ENCODE measurements at regions of chr12 and their contacts with region 1.

Region 1: GRCh38 chr12:70733385-70733784 is 96.2 kb upstream of the PTPRB start:
- DNase-seq: peak; percentile 71 to 79 (median 72)
- ATAC-seq: peak; percentile 95
- H3K4me3 ChIP-seq: no peak overlapping the region
- H3K27ac ChIP-seq: no peak overlapping the region
- H3K4me1 ChIP-seq: no peaks in the 10 kb centered on the region
- H3K27me3 ChIP-seq: no peaks in the 10 kb centered on the region
- CTCF ChIP-seq: peak; percentile 63 to 86 (median 68)
- EP300 ChIP-seq: 0 out of 2 replicates have a peak, but pooled peaks have one; percentile 17
- POLR2A ChIP-seq: no peak
- RAD21 ChIP-seq: peak; percentile 95

Region 2: DNA sequence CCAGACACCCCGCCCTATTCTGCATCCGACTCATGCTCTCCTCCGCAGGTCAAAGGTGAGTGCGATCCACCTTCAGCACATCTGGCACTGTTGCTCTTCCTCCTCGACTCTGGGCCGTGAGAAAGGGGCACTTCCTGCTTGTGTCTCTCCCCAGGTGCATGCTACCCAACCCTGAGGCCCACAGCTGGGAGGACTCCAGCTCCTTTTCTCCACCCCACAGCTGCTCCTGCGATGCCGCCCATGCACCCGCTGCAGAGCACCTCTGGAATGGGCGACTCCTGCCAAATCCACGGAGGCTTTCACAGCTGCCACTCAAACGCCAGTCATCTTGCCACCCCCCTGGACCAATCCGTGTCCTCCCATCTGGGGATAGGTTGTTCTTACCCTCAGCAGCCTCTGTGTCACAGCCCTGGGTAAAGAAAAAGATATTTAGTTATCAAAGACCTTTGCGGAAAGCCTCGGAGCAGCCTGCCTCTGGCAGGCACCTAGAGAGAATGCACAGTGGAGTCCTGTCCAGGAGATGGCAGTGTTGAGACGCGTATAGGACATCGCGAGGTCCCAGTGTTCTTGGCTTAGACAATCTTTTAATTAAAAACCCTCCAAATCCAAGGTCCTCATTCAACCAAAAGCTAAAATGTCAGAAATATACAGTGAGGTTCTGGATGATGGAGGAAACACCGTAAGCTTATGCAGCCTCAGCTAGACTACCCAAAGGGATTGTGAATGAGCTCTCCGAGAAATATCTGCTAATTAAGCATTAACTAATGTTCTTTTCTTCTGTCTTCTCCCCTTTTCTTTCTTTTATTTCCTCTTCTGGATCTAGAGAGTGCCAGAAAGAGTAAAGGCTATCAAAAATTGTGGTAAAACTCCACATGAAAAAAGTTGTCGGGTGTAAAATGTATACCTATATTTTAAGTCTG is 854.1 kb before region 1 on chr12:
- CTCF ChIA-PET with region 1: interaction called, 8 read pairs
- POLR2A ChIA-PET with region 1: no interaction called
- in situ Hi-C with region 1: loop called (anchors 5 kb)
- intact Hi-C with region 1: loop called (anchors 1 kb)
- DNase-seq: peak; percentile 74 to 80 (median 77)
- ATAC-seq: peak; percentile 99
- H3K4me3 ChIP-seq: no peak overlapping the region
- H3K27ac ChIP-seq: no peak overlapping the region
- H3K4me1 ChIP-seq: peaks cover 0 to 7% of the 10 kb centered on the region in 2 experiments; a peak in 2 of 5 replicates
- H3K27me3 ChIP-seq: peaks cover 5 to 12% of the 10 kb centered on the region in 2 experiments; a peak in 4 of 5 replicates
- CTCF ChIP-seq: peak; percentile 80 to 92 (median 92)
- EP300 ChIP-seq: no peak
- POLR2A ChIP-seq: no peak
- RAD21 ChIP-seq: peak; percentile 86 to 94

Region 3: DNA sequence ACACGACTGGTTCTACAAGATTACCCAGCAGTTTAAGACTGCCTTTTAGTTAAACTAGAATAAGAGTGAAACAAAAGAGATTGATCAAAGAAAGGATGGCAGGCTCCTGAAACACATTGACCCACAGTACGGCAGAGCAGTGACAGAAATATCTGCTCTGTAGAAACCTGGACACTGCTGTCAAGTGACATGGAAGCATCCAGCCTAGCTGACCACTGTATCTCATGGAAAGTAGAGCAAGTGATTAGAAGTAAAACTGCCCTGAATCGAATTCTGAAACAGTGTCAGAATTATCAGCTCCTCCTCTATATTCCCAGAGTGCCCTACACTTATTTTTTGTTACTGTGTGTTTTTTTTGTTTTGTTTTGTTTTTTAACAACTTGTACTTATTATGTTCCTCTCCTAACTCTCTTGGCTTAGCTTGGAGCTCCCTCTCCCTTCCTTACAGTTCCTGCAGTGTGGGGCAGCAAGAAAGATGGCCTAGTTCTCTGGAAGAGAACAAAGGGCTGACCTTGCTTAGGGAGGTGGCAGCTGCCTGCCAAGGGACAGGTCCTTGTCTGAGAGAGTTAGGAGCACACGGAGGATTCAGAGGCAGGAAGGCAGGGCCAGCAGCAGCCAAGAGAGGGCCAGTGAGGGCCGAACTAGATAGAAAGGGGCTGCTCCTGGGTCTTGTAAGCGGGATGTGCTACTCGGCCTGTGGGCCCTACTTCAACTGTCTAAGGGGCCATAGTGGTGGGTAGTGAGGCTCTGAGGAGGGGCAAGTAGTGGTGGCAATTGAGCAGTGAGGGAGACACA is 90.0 kb after region 1 on chr12:
- CTCF ChIA-PET with region 1: interaction called, 9 read pairs
- POLR2A ChIA-PET with region 1: no interaction called
- in situ Hi-C with region 1: no loop called
- intact Hi-C with region 1: loop called (anchors 1 kb)
- DNase-seq: no peak
- ATAC-seq: peak; percentile 72
- H3K4me3 ChIP-seq: no peak overlapping the region
- H3K27ac ChIP-seq: no peak overlapping the region
- H3K4me1 ChIP-seq: no peaks in the 10 kb centered on the region
- H3K27me3 ChIP-seq: no peaks in the 10 kb centered on the region
- CTCF ChIP-seq: peak; percentile 14 to 45 (median 22); a peak in 3 of 6 replicates
- EP300 ChIP-seq: no peak
- POLR2A ChIP-seq: no peak
- RAD21 ChIP-seq: peak; percentile 25 to 60; a peak in 3 of 4 replicates

Region 4: GRCh38 chr12:71014180-71014785 is 280.9 kb after region 1 on chr12:
- CTCF ChIA-PET with region 1: interaction called, 4 read pairs
- POLR2A ChIA-PET with region 1: no interaction called
- in situ Hi-C with region 1: loop called (anchors 25 kb)
- intact Hi-C with region 1: loop called (anchors 1 kb)
- DNase-seq: peak in 2 of 4 experiments; percentile 7 to 29
- ATAC-seq: peak; percentile 42; the same call in 1 of the 3 replicates
- H3K4me3 ChIP-seq: no peak overlapping the region
- H3K27ac ChIP-seq: no peak overlapping the region
- H3K4me1 ChIP-seq: no peaks in the 10 kb centered on the region
- H3K27me3 ChIP-seq: no peaks in the 10 kb centered on the region
- CTCF ChIP-seq: peak in 2 of 3 experiments; percentile 17 to 56; a peak in 4 of 6 replicates
- EP300 ChIP-seq: no peak
- POLR2A ChIP-seq: no peak
- RAD21 ChIP-seq: peak; percentile 89 to 91